T-cell (primary cell): ENCODE measurements at regions of chr6 and their contacts with region 1.

Region 1: DNA sequence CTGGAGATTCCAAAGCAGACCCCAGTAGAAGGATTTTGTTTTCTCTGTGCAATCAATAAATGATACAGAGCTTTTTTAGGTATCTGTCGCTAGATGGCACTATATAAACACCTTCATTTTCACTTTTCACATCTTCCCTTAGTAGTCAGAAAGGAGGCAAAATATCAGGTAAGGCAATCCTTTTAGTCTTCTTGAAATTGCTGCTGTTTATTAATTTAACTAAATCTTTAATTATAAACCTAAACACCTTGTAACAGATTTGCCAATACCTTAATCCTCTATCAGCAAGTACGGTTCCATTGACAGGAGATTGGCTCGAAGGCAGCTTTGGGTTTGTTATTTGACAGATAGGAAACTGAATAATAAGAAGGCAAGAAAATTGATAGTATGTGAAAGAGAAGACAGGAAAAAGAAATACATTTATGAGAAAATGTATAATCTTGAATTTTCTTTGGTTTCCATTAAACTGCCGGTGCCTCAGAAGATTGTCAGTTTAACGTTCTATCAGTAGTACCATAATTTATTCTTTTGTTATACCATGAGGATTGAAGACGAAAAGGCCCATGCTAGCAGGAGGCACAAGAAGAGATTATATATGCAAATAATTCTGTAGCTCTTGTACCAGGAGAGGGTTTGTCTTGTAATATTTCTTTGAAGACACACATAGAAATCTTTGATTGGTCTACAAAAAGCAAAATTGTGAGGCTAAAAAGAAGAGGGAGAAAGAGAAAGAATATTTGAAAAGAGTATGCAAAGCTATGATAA is 23.5 kb upstream of the IBTK start:
- DNase-seq: peak in 1 of 35 experiments; percentile 53
- ATAC-seq: peak in 2 of 4 experiments; percentile 40 to 46
- H3K4me3 ChIP-seq: no peak overlapping the region
- H3K4me3 Mint-ChIP-seq: no peak overlapping the region
- H3K27ac ChIP-seq: no peak overlapping the region
- H3K27ac Mint-ChIP-seq: no peak overlapping the region
- H3K4me1 ChIP-seq: no peaks in the 10 kb centered on the region
- H3K4me1 Mint-ChIP-seq: no peaks in the 10 kb centered on the region
- H3K27me3 ChIP-seq: no peaks in the 10 kb centered on the region
- H3K27me3 Mint-ChIP-seq: peaks cover 0 to 3% of the 10 kb centered on the region in 2 donors

Region 2: DNA sequence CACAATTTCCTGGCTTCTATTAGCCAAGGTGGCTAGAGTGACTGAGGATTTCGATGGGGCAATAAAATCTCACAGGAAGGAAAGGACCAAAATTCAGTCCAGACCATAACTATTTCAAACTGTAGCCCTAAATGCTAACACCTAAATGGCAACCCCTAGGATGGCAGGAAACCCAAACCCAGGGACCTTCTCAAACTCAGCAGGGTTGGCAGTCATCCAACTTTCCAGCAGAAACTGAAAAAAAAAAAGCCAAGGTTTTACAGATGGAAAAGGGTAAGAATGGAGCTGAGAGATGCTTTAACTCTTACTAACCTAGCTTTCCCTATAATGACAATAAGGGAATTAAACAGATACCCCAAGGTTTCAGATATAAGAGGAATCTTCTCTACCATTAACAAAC is 34.0 kb before region 1 on chr6:
- CTCF ChIA-PET with region 1: no interaction called
- POLR2A ChIA-PET with region 1: no interaction called
- DNase-seq: no peak
- ATAC-seq: no peak
- H3K4me3 ChIP-seq: no peak overlapping the region
- H3K4me3 Mint-ChIP-seq: no peak overlapping the region
- H3K27ac ChIP-seq: no peak overlapping the region
- H3K27ac Mint-ChIP-seq: no peak overlapping the region
- H3K4me1 ChIP-seq: peaks cover 0 to 3% of the 10 kb centered on the region in 2 experiments
- H3K4me1 Mint-ChIP-seq: peaks cover 23 to 30% (median 24%) of the 10 kb centered on the region in 3 donors
- H3K27me3 ChIP-seq: no peaks in the 10 kb centered on the region
- H3K27me3 Mint-ChIP-seq: no peaks in the 10 kb centered on the region

Region 3: GRCh38 chr6:82247634-82248232 is 23.3 kb before region 1 on chr6 and contains the start of gene IBTK:
- CTCF ChIA-PET with region 1: interaction called, 3 to 10 read pairs
- POLR2A ChIA-PET with region 1: no interaction called
- DNase-seq: peak; percentile 74 to 95 (median 88)
- ATAC-seq: peak; percentile 89 to 95 (median 92)
- H3K4me3 ChIP-seq: peak within 1 kb of the TSS; percentile 82 to 95
- H3K4me3 Mint-ChIP-seq: peak within 1 kb of the TSS; percentile 95 to 98 (median 97)
- H3K27ac ChIP-seq: peak within 1 kb of the TSS; percentile 83
- H3K27ac Mint-ChIP-seq: peak within 1 kb of the TSS; percentile 93 to 96
- H3K4me1 ChIP-seq: peaks cover 10 to 27% of the 10 kb centered on the region in 2 experiments
- H3K4me1 Mint-ChIP-seq: peaks cover 42 to 44% (median 44%) of the 10 kb centered on the region in 3 donors
- H3K27me3 ChIP-seq: no peaks in the 10 kb centered on the region
- H3K27me3 Mint-ChIP-seq: no peaks in the 10 kb centered on the region
- total RNA-seq, gene IBTK: 19.2 to 21.9 (median 20.7) TPM

Region 4: DNA sequence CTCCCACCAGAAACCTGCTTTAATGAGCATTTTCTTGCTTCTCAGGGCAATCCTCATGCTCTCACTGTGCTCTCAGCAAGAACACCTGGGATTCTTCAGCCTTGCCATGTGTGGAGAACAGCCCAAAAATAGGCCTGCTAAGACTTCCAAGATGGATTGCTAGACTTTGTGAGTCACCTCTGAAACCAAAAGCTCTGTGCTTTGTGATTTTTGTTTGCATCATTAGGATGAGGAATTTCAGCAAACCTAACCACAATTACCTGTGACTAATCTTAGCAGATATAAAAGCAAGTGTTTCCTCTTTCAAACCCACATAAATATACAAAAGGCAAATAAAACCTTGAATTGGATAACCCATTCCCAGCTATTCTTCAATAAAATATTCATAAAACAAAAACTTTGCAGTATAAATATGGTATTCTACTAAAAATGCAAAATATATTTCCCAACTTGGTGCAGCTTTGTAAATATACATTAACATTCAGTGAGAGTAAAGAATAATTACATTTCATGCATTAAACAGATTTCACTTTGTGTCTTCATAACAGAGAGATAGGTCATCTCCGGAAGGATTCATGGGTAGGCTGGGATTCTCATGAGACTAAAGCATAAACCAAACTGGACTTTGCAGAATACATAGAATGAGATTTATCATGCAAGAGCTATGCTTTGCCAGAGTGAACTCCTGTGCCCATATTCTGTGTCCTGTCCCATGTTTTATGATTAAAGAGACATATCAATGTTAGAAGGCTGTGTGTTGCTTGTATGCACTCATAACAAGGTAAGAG is 126.1 kb after region 1 on chr6:
- CTCF ChIA-PET with region 1: interaction called in 1 of 2 experiments, 10 read pairs
- POLR2A ChIA-PET with region 1: no interaction called
- DNase-seq: no peak
- ATAC-seq: no peak
- H3K4me3 ChIP-seq: no peak overlapping the region
- H3K4me3 Mint-ChIP-seq: no peak overlapping the region
- H3K27ac ChIP-seq: no peak overlapping the region
- H3K27ac Mint-ChIP-seq: no peak overlapping the region
- H3K4me1 ChIP-seq: no peaks in the 10 kb centered on the region
- H3K4me1 Mint-ChIP-seq: no peaks in the 10 kb centered on the region
- H3K27me3 ChIP-seq: no peaks in the 10 kb centered on the region
- H3K27me3 Mint-ChIP-seq: peaks cover 2 to 7% of the 10 kb centered on the region in 2 donors

Region 5: GRCh38 chr6:83057705-83058321 is 786.8 kb after region 1 on chr6:
- CTCF ChIA-PET with region 1: interaction called, 5 to 20 read pairs
- POLR2A ChIA-PET with region 1: no interaction called
- DNase-seq: peak in 11 of 35 experiments; percentile 0 to 41 (median 13)
- ATAC-seq: peak in 1 of 4 experiments; percentile 53
- H3K4me3 ChIP-seq: no peak overlapping the region
- H3K4me3 Mint-ChIP-seq: no peak overlapping the region
- H3K27ac ChIP-seq: no peak overlapping the region
- H3K27ac Mint-ChIP-seq: no peak overlapping the region
- H3K4me1 ChIP-seq: no peaks in the 10 kb centered on the region
- H3K4me1 Mint-ChIP-seq: peaks cover 6 to 34% (median 17%) of the 10 kb centered on the region in 3 donors
- H3K27me3 ChIP-seq: no peaks in the 10 kb centered on the region
- H3K27me3 Mint-ChIP-seq: no peaks in the 10 kb centered on the region